ENCODE measurements at regions of chr1 and their contacts with region 1.

Region 1: DNA sequence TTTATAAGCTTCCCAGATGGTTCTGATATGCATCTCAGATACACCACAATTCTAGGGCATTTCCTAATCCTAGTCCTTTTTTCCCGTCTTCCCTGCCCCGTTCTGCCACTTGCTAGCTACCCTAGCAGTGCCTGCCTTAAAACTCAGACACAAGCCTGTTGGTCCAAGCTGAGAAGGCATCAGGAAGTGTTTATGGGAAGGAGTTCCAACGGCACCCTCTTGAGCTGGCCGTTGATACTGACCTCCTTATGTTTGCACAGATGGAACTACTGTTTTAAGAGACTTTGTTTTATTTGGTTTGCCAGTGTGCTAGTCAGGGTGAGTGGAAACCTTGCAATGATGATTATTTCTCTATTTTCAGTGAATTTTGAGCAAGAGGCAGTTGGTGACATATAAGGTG is 67.2 kb downstream of the UCK2 start:
- DNase-seq: no peak
- H3K4me3 ChIP-seq: no peak overlapping the region
- CTCF ChIP-seq: peak; percentile 21

Region 2: DNA sequence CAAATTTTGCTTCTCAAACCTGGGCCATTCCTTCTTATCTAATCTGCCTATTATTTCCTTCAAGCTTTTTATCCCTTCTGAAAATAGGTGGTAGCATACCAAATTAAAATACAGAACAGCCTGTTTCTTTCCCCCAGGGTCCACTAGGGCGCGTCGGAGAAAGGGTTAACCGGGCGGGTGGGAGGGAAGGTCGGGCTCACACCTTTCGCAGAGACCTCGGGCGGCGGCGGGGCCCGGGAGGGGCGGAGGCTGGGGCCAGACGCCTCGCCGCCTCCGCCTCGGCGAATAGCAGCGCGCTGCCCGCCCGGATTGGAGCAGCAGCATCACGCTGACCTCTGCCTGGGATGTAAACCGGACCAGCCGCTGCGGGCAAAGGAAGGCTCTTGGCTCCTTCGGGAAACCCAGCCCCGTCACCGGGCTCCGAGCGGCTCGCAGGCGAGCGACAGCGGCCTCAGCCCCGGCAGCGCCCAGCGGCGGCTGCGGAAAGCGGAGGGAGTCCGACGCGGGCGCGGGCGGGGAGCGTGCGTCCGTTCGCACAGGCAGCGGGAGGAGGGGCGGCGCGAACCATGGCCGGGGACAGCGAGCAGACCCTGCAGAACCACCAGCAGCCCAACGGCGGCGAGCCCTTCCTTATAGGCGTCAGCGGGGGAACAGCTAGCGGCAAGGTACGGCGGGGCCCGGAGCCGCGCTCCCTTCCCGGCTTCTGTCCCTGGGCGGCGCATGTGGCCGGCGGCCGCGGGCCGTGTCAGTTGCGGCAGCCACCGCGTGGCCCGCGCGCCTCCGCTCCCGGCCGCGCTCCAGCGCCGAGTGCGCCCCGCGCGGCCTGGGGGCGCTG is 67.1 kb before region 1 on chr1 and contains the start of gene UCK2:
- in situ Hi-C with region 1: loop called (anchors 5 kb)
- DNase-seq: no peak
- H3K4me3 ChIP-seq: peak within 1 kb of the TSS; percentile 90
- CTCF ChIP-seq: no peak